ENCODE measurements at regions of chr6 and their contacts with region 1.

Region 1: DNA sequence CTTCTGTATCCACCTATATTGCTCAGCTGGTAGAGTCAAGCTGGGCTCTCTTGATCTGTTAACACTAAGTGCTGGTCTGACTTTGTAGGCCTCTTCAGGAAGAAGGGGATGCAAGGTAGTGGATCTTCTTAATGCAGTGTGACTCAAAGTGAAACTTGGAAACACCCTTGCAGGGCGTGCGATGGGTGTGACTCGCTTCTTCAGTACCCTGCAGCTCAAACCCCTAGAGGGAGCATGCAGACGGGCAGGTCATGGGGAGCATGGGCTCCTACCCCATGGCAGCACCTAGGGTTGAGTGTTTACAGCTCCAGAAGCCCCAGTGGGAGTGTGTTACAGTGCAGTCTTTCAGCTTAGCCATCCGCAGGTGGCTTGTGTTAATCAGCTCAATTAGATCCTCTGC is 757 bp upstream of the SAMD3 start:
- DNase-seq: peak in 8 of 9 donors; percentile 38 to 65 (median 52)
- ATAC-seq: peak; percentile 89
- H3K4me3 ChIP-seq: peak overlapping the region; percentile 19
- H3K4me3 Mint-ChIP-seq: peak overlapping the region; percentile 4 to 93 (median 80)
- H3K27ac ChIP-seq: peak overlapping the region; percentile 57
- H3K27ac Mint-ChIP-seq: peak overlapping the region; percentile 89 to 97 (median 94)
- H3K4me1 ChIP-seq: peaks cover 16 to 20% of the 10 kb centered on the region in 2 donors
- H3K4me1 Mint-ChIP-seq: peaks cover 10 to 47% (median 39%) of the 10 kb centered on the region in 7 donors
- H3K27me3 ChIP-seq: no peaks in the 10 kb centered on the region
- H3K27me3 Mint-ChIP-seq: no peaks in the 10 kb centered on the region

Region 2: DNA sequence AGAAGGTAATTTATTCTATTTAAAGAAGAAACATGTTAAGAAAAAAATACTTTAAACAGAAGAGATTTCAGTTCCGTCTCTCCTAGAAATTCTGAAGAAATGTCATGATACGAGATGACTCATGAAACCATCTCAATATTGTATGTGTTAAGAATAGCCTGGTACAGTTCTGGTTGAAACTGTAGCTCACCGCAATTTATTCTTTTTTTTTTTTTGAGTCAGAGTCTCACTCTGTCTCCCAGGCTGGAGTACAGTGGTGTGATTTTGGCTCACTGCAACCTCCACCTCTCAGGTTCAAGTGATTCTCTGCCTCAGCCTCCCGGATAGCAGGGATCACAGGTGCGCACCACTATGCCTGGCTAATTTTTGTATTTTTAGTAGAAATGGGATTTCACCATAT is 616.8 kb before region 1 on chr6:
- CTCF ChIA-PET with region 1: no interaction called
- POLR2A ChIA-PET with region 1: no interaction called
- intact Hi-C with region 1: loop called in 1 of 2 experiments (anchors 10 kb)
- DNase-seq: no peak
- ATAC-seq: no peak
- H3K4me3 ChIP-seq: no peak overlapping the region
- H3K4me3 Mint-ChIP-seq: no peak overlapping the region
- H3K27ac ChIP-seq: no peak overlapping the region
- H3K27ac Mint-ChIP-seq: no peak overlapping the region
- H3K4me1 ChIP-seq: no peaks in the 10 kb centered on the region
- H3K4me1 Mint-ChIP-seq: no peaks in the 10 kb centered on the region
- H3K27me3 ChIP-seq: no peaks in the 10 kb centered on the region
- H3K27me3 Mint-ChIP-seq: no peaks in the 10 kb centered on the region

Region 3: GRCh38 chr6:130037207-130037811 is 186.2 kb before region 1 on chr6:
- CTCF ChIA-PET with region 1: no interaction called
- POLR2A ChIA-PET with region 1: no interaction called
- intact Hi-C with region 1: loop called in 1 of 2 experiments (anchors 5 kb)
- DNase-seq: peak in 4 of 9 donors; percentile 18 to 41 (median 34)
- ATAC-seq: peak; percentile 68
- H3K4me3 ChIP-seq: no peak overlapping the region
- H3K4me3 Mint-ChIP-seq: no peak overlapping the region
- H3K27ac ChIP-seq: no peak overlapping the region
- H3K27ac Mint-ChIP-seq: peak overlapping the region in 1 of 9 donors; percentile 10
- H3K4me1 ChIP-seq: peaks cover 0 to 5% of the 10 kb centered on the region in 2 donors
- H3K4me1 Mint-ChIP-seq: peaks cover 31 to 90% (median 74%) of the 10 kb centered on the region in 7 donors
- H3K27me3 ChIP-seq: no peaks in the 10 kb centered on the region
- H3K27me3 Mint-ChIP-seq: no peaks in the 10 kb centered on the region

Region 4: DNA sequence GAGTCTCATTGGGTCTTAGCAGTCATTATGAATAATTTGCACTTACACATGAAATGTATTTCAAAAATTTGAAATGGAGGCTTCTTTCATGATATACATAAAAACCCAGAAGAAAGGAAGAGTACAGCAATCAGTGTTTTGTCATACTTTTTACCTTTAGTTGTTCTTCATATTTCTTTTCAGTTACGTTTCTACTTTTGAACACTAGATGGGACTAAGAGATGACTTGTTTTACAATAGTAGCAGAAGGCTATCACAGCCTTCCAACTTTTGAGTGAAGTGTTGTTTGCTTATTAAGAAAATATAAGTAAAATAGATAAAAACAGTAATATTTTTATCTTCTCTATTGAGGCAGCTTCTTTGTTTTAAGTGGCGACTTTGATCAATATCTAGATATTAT is 147.0 kb before region 1 on chr6:
- CTCF ChIA-PET with region 1: no interaction called
- POLR2A ChIA-PET with region 1: no interaction called
- intact Hi-C with region 1: loop called (anchors 5 kb)
- DNase-seq: peak in 5 of 9 donors; percentile 7 to 36 (median 27)
- ATAC-seq: no peak
- H3K4me3 ChIP-seq: no peak overlapping the region
- H3K4me3 Mint-ChIP-seq: peak overlapping the region in 1 of 10 donors; percentile 37
- H3K27ac ChIP-seq: no peak overlapping the region
- H3K27ac Mint-ChIP-seq: no peak overlapping the region
- H3K4me1 ChIP-seq: no peaks in the 10 kb centered on the region
- H3K4me1 Mint-ChIP-seq: peaks cover 12 to 31% (median 23%) of the 10 kb centered on the region in 7 donors
- H3K27me3 ChIP-seq: no peaks in the 10 kb centered on the region
- H3K27me3 Mint-ChIP-seq: no peaks in the 10 kb centered on the region

Region 5: DNA sequence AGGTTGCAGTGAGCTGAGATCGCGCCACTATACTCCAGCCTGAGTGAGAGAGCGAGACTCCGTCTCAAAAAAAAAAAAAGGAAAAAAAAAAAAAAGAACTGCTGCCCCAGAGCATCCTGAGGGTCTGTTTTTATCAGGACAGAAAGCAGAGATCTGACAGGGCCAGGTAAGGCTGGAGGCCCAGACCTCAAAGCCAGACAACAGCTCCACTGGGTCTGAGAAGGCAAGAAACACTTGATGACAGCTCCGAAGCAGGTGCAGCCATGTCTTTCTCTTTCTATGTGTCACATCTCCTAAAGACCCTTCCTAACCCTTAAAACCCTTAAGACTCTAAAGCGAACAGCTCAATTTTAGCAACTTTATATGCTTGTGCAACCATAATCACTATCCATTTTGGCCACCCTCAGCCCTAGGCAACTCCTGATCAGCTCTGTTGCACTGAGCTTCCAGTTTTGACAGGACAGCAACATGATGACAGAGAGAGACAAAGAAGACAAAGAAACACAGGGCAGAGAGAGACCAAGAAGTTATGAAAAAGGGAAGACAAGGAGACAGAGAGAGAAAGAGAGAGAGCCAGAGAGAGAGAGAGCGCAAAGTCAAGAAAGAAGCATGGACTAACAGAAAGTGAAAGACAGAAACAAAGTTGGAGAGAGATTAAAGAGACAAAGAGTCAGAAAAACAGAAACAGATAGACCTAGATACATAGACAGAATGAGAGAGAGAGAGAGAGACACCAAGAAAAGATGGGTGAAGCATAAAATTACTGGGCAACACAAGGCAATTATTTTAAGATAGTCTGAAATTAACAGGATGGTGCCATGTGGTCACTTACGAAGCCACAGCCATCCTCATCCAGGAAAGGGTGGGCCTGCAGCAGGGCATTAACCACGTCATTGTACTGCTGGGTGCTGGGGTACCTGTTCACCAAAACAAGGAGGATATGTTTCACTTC is 40.0 kb before region 1 on chr6:
- CTCF ChIA-PET with region 1: interaction called, 5 read pairs
- POLR2A ChIA-PET with region 1: interaction called, 11 read pairs
- intact Hi-C with region 1: loop called in 1 of 2 experiments (anchors 1 kb)
- DNase-seq: peak in 7 of 9 donors; percentile 5 to 75 (median 60)
- ATAC-seq: peak; percentile 80
- H3K4me3 ChIP-seq: peak overlapping the region; percentile 33
- H3K4me3 Mint-ChIP-seq: peak overlapping the region; percentile 39 to 81 (median 70)
- H3K27ac ChIP-seq: peak overlapping the region; percentile 75
- H3K27ac Mint-ChIP-seq: peak overlapping the region; percentile 59 to 98 (median 91)
- H3K4me1 ChIP-seq: peaks cover 23 to 32% of the 10 kb centered on the region in 2 donors
- H3K4me1 Mint-ChIP-seq: peaks cover 27 to 76% (median 65%) of the 10 kb centered on the region in 7 donors
- H3K27me3 ChIP-seq: no peaks in the 10 kb centered on the region
- H3K27me3 Mint-ChIP-seq: no peaks in the 10 kb centered on the region

Region 6: DNA sequence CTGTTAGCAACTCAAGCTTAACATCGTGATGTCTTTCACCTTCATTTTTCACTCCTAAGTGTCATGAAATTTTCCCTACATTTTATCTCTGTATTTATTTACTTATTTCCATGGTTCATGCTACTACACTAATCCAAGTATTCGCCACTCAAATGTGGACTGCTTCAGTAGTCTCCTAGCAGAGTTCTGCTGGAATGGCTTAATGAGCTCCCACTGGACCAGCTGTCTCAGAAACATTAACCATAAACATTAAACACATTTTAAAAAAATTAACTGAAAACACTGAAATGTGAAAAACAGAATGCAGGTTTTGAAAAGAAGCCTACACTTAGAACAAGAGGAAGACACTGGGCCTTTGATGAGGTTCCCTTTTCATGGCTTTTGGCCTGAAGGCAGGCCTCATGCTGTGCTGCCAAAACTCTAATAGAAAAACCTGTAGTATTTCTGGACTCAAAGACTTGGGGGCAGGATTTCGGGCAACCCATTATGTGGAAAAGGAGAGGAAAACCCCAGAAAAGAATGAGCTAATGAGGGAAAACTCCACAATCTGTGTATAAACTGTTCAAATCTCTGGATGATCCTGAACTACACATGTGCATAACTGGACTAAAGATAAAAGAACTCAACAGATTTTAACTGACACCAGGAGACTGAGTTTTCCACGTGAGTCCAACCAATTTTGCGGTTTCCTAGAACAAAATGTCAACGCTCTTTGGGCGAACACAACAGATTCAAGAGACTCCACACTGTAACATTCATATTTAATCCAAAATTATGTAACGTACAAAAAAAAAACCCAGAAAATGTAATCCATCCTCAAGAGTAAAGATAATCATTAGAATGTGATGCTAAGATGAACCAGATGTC is 33.7 kb before region 1 on chr6:
- CTCF ChIA-PET with region 1: interaction called, 3 read pairs
- POLR2A ChIA-PET with region 1: interaction called, 11 read pairs
- intact Hi-C with region 1: loop called in 1 of 2 experiments (anchors 1 kb)
- DNase-seq: peak in 4 of 9 donors; percentile 11 to 14 (median 13)
- ATAC-seq: no peak
- H3K4me3 ChIP-seq: peak overlapping the region; percentile 10
- H3K4me3 Mint-ChIP-seq: peak overlapping the region in 8 of 10 donors; percentile 14 to 75 (median 58)
- H3K27ac ChIP-seq: peak overlapping the region; percentile 46
- H3K27ac Mint-ChIP-seq: peak overlapping the region in 8 of 9 donors; percentile 66 to 95 (median 84)
- H3K4me1 ChIP-seq: peaks cover 35 to 39% of the 10 kb centered on the region in 2 donors
- H3K4me1 Mint-ChIP-seq: peaks cover 47 to 98% (median 91%) of the 10 kb centered on the region in 7 donors
- H3K27me3 ChIP-seq: no peaks in the 10 kb centered on the region
- H3K27me3 Mint-ChIP-seq: no peaks in the 10 kb centered on the region

Measured in naive thymus-derived CD4-positive, alpha-beta T cell (primary cell).